Left ventricle myocardium inferior (tissue), 1 donor: ENCODE measurements at regions of chr17 and their contacts with region 1.

Region 1: DNA sequence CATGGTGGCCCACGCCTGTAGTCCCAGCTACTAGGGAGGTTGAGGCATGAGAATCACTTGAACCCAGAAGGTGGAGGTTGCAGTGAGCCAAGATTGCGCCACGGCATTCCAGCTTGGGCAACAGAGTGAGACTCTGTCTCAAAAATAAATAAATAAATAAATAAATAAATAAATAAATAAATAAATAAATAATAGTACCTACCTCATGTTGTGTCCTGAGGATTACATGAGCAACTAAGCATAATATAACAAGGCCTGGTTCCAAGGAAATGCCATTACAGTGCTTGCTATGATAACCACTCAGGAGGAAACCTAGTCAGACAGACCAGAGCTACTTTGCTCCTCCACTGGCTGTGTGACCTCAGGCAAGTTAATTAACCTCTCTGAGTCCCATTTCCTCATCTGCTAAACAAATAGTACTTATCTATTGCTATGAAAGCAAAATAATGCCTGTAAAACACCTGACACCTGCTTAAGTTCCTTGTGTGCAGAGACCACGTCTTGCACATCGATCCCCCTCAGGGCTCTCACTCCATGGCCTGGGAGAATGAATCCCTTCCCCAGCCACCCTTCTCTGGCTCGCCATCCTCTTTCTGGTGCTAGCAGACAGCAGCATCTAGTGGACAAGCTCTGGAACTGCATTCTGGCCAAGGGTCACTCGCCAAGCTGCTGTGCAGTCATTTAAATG is 7.5 kb downstream of the EPOP start:
- DNase-seq: peak; percentile 49
- H3K4me3 ChIP-seq: no peak overlapping the region
- H3K27ac ChIP-seq: no peak overlapping the region
- H3K4me1 ChIP-seq: no peaks in the 10 kb centered on the region
- H3K27me3 ChIP-seq: peaks cover 53% of the 10 kb centered on the region
- CTCF ChIP-seq: peak; percentile 99

Region 2: GRCh38 chr17:38557836-38558727 is 109.2 kb before region 1 on chr17:
- intact Hi-C with region 1: loop called (anchors 5 kb)
- DNase-seq: peak; percentile 90
- H3K4me3 ChIP-seq: peak overlapping the region; percentile 65
- H3K27ac ChIP-seq: peak overlapping the region; percentile 30
- H3K4me1 ChIP-seq: peaks cover 33% of the 10 kb centered on the region
- H3K27me3 ChIP-seq: peaks cover 71% of the 10 kb centered on the region
- CTCF ChIP-seq: peak; percentile 94